PC-3 (cell line): ENCODE measurements at regions of chr19 and their contacts with region 1.

Region 1: GRCh38 chr19:6378041-6378440 is 2.3 kb upstream of the PSPN start:
- DNase-seq: no peak
- ATAC-seq: no peak
- H3K4me3 ChIP-seq: no peak overlapping the region
- H3K27ac ChIP-seq: no peak overlapping the region
- H3K4me1 ChIP-seq: peaks cover 5% of the 10 kb centered on the region
- H3K27me3 ChIP-seq: no peaks in the 10 kb centered on the region
- CTCF ChIP-seq: no peak

Region 2: DNA sequence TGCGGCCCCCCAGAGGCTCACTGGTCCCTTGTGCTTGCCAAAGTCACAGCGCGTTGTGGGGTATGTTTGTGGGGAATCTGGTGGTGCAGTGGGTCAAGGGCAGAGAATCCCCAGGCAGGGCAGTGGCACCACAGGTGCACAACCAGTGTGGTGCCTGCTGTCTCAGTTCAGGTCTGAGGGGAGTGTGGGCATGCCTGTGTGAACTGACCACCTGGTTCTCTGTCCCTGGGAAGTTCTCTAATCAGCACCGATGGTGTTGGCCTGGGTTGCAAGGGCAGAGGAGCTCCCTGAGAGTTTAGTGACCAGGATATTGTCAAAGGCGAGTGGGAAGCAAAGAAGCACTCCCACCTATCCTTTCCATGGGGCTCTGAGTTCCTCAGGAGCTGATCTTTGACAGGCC is 204.9 kb before region 1 on chr19:
- CTCF ChIA-PET with region 1: no interaction called
- POLR2A ChIA-PET with region 1: interaction called, 19 read pairs
- intact Hi-C with region 1: no loop called
- DNase-seq: no peak
- ATAC-seq: no peak
- H3K4me3 ChIP-seq: no peak overlapping the region
- H3K27ac ChIP-seq: no peak overlapping the region
- H3K4me1 ChIP-seq: no peaks in the 10 kb centered on the region
- H3K27me3 ChIP-seq: peaks cover 13% of the 10 kb centered on the region
- CTCF ChIP-seq: no peak

Region 3: GRCh38 chr19:6362027-6362350 is 16.1 kb before region 1 on chr19:
- CTCF ChIA-PET with region 1: no interaction called
- POLR2A ChIA-PET with region 1: no interaction called
- intact Hi-C with region 1: no loop called
- DNase-seq: no peak
- ATAC-seq: peak; percentile 25
- H3K4me3 ChIP-seq: peak overlapping the region; percentile 87
- H3K27ac ChIP-seq: no peak overlapping the region
- H3K4me1 ChIP-seq: peaks cover 16% of the 10 kb centered on the region
- H3K27me3 ChIP-seq: no peaks in the 10 kb centered on the region
- CTCF ChIP-seq: no peak